Activated CD8-positive, alpha-beta T cell treated with anti-CD3 and anti-CD28 coated beads for 36 hours (primary cell): ENCODE measurements at regions of chr11 and their contacts with region 1.

Region 1: DNA sequence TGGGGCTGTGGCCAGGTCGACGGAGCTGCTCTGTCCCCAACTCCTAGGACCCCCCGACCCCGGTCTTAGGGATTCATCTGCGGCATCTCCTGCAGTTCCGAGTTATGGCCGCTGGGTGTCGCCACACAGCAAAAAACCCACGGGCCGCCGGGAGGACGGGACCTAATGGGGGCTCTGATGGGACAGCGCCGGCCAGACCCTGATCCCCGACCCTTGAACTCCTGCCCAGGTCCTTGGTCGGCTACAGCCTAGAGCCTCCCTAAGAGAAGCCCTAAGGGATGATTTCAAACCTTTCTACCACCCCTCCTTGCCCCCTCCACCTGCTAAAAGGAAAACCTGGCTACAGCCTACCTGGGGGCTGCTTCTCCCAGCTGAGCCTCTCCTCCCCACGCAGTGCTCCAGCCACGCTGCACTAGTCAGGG is 30.8 kb upstream of the LRRC10B start:
- DNase-seq: peak; percentile 70
- ATAC-seq: peak; percentile 64
- H3K4me3 Mint-ChIP-seq: no peak overlapping the region
- H3K27ac Mint-ChIP-seq: no peak overlapping the region
- H3K4me1 Mint-ChIP-seq: peaks cover 15% of the 10 kb centered on the region
- H3K27me3 Mint-ChIP-seq: peaks cover 2% of the 10 kb centered on the region
- CTCF ChIP-seq: peak; percentile 94

Region 2: GRCh38 chr11:61509043-61510029 is 31.6 kb after region 1 on chr11:
- CTCF ChIA-PET with region 1: interaction called, 253 read pairs
- POLR2A ChIA-PET with region 1: interaction called, 3 read pairs
- intact Hi-C with region 1: no loop called
- DNase-seq: peak; percentile 80
- ATAC-seq: peak; percentile 88
- H3K4me3 Mint-ChIP-seq: peak overlapping the region; percentile 17
- H3K27ac Mint-ChIP-seq: no peak overlapping the region
- H3K4me1 Mint-ChIP-seq: no peaks in the 10 kb centered on the region
- H3K27me3 Mint-ChIP-seq: peaks cover 42% of the 10 kb centered on the region
- CTCF ChIP-seq: peak; percentile 50

Region 3: DNA sequence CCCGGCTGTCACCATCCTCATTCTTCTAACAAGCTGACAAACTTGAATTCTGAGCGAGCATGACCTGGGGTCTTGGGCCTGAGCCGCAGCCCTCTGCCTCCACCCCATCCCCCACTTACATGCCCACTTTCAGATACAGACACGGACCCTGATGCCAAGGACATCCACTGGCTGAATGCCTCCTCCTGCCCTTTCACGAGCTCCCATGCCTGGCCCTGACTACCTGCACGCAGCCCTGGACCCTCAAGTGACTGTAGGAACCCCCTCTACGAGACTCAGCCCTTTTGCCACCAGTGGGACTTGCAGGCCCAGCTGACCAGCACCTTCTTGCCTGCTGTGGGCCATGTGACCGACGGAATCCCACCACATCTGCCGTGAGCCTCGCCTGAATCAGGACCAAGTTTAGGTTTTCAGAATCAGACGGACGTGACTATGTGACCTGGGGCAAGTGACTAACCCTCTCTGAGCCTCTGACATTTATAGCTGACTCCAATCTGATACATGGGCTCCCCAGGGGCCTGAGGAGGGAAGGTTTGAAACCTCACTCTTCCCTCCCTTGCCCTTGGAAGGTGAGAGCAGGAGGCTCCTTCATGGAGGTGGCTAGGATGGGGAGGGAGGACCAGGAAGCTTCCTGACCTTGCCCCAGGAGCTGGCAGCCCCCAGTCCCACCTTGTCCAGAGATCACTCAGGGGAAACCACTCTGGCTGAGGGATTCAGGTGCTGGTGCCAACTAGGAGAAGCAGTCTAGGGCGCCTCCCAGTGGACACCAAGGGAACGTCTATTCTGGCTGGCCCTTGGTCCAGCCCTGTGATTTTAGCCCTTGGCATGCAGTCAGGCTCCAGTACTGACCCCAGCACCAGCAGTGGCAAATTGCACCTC is 150.1 kb after region 1 on chr11:
- CTCF ChIA-PET with region 1: interaction called, 10 read pairs
- POLR2A ChIA-PET with region 1: no interaction called
- intact Hi-C with region 1: loop called (anchors 5 kb)
- DNase-seq: peak; percentile 68
- ATAC-seq: peak; percentile 77
- H3K4me3 Mint-ChIP-seq: no peak overlapping the region
- H3K27ac Mint-ChIP-seq: no peak overlapping the region
- H3K4me1 Mint-ChIP-seq: peaks cover 7% of the 10 kb centered on the region
- H3K27me3 Mint-ChIP-seq: peaks cover 9% of the 10 kb centered on the region
- CTCF ChIP-seq: peak; percentile 76

Region 4: GRCh38 chr11:61827571-61828378 is 350.0 kb after region 1 on chr11 and contains the start of gene FADS2:
- CTCF ChIA-PET with region 1: no interaction called
- POLR2A ChIA-PET with region 1: no interaction called
- intact Hi-C with region 1: no loop called
- DNase-seq: peak; percentile 94
- ATAC-seq: peak; percentile 87
- H3K4me3 Mint-ChIP-seq: peak within 1 kb of the TSS; percentile 86
- H3K27ac Mint-ChIP-seq: peak within 1 kb of the TSS; percentile 91
- H3K4me1 Mint-ChIP-seq: peaks cover 32% of the 10 kb centered on the region
- H3K27me3 Mint-ChIP-seq: peaks cover 9% of the 10 kb centered on the region
- CTCF ChIP-seq: no peak
- total RNA-seq, gene FADS2: 131 to 134 TPM